ENCODE measurements at regions of chr9 and their contacts with region 1.

Region 1: GRCh38 chr9:108664309-108665255 is 191.2 kb downstream of the ACTL7B start:
- DNase-seq: peak; percentile 71
- H3K4me3 ChIP-seq: no peak overlapping the region
- H3K27ac ChIP-seq: no peak overlapping the region
- H3K4me1 ChIP-seq: peaks cover 52% of the 10 kb centered on the region
- H3K27me3 ChIP-seq: no peaks in the 10 kb centered on the region

Region 2: DNA sequence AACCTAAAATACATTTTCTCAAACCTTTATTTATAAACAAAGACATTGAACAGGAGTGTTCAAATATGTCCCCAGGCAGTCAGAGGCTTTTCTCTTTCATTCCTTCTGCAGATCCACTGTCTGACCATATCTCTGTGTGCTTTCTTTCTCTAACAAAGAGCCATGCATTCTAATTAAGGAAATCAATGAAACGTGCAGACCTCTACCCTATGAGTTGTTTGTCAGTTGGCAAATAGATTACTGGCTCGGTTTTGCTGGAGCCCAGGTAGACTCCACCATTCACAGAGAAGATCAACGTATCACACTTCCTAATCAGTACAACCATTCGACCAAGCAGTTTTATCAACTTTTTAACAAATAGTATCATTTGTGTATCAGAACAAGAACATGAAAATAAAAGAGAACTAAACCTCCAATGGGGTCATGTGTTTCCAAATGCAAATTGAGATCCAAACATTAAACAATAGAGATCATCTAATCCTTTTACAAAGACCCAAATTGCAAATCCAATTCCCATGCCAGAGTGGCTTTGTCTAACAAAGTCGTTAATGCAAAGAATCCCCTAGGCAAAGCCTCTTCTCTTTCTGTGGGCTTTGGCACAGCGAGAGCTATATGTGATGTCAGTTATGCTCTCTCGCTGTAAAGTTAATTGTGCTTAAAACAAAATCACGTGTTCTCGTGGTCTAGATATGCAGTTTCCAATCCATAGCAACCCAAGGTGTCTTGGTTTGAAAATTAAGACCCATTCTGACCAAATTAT is 1191.8 kb before region 1 on chr9:
- in situ Hi-C with region 1: loop called (anchors 10 kb)
- DNase-seq: no peak
- H3K4me3 ChIP-seq: no peak overlapping the region
- H3K27ac ChIP-seq: no peak overlapping the region
- H3K4me1 ChIP-seq: no peaks in the 10 kb centered on the region
- H3K27me3 ChIP-seq: no peaks in the 10 kb centered on the region